ENCODE measurements at regions of chr17 and their contacts with region 1.

Region 1: GRCh38 chr17:64964796-64965195 is 45.5 kb upstream of the LRRC37A3 start:
- DNase-seq: no peak
- ATAC-seq: no peak
- H3K4me3 ChIP-seq: peak overlapping the region; percentile 50
- H3K27ac ChIP-seq: peak overlapping the region; percentile 83
- H3K4me1 ChIP-seq: peaks cover 15% of the 10 kb centered on the region
- H3K27me3 ChIP-seq: no peaks in the 10 kb centered on the region
- CTCF ChIP-seq: no peak

Region 2: GRCh38 chr17:64920026-64920418 is 44.8 kb before region 1 on chr17:
- intact Hi-C with region 1: loop called in 1 of 2 experiments (anchors 5 kb)
- DNase-seq: peak; percentile 33 to 56
- ATAC-seq: peak; percentile 19 to 29 (median 20)
- H3K4me3 ChIP-seq: peak overlapping the region; percentile 81
- H3K27ac ChIP-seq: peak overlapping the region; percentile 96
- H3K4me1 ChIP-seq: no peaks in the 10 kb centered on the region
- H3K27me3 ChIP-seq: no peaks in the 10 kb centered on the region
- CTCF ChIP-seq: no peak

Region 3: DNA sequence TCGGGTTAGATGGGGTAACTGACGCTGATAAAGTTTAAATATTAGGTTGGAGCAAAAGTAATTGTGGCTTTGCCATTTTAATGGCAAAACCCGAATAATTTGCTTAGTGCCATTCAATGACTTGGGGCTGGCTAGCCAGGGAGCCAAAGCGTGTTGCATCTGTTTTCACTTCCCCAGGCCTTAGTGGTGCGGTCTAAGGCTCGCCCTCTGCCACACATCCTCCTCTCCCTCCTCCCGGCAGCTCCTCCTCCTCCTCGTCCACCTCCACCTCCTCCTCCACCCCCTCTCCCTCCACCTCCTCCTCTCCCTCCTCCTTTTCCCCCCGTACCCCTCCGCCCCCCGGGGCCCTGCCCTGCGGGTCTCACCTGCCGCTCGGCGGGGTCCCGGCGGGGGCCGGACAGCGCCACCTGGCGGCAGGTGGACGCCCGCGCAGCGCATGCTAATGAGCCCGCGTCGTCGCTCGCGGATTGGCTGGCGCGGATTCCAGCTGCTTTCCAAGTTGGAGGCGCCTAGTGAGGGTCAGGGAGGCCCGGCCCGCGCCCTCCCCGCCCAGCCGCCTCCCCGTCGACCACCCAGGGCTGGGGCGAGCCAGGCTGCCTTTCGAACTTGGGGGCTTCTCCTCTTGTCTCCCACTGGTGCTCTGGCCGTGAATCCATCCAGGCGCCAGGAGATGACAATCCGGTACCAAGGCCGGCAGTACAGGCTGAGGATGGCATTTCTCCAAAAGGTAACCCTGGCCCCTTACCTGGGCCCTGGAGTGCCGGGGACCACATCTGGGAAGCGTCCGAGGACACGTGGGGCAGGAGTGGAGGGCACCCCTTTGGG is 135.7 kb after region 1 on chr17:
- intact Hi-C with region 1: loop called in 1 of 2 experiments (anchors 5 kb)
- DNase-seq: peak; percentile 87 to 94
- ATAC-seq: peak; percentile 93 to 95 (median 94)
- H3K4me3 ChIP-seq: peak overlapping the region; percentile 74
- H3K27ac ChIP-seq: peak overlapping the region; percentile 76
- H3K4me1 ChIP-seq: peaks cover 17% of the 10 kb centered on the region
- H3K27me3 ChIP-seq: no peaks in the 10 kb centered on the region
- CTCF ChIP-seq: peak; percentile 78

Measured in psoas muscle (tissue), 8 donors.